Posterior vena cava (tissue), 2 donors: ENCODE measurements at regions of chr12 and their contacts with region 1.

Region 1: DNA sequence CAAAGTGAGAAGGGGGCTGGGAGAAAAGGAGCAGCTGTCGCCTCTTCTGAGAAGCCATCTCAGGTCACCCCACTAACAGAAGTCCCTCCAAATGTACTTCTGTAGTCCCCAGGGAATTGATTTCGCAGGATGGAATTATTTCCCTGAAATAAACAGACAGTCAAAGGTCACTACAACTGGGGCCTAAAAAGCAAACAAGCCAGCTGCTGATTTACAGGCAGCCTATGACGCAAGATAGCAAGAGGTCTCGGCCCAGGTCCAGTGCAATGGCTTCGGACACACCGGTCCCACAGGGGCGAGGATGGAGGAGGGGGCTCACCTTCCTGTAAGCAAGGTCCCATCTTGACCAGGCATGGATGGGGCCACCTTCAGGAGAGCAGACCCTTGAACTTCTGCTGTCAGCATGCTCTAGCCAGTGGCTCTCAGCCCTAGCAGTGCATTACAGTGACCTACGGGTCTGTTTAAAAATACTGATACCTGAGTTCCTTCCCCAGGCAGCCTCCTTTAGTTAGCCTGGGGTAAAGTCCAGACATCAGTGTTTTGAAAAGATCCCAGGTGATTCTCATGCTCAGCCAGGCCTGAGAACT is 18.1 kb downstream of the NUAK1 start:
- DNase-seq: no peak

Region 2: DNA sequence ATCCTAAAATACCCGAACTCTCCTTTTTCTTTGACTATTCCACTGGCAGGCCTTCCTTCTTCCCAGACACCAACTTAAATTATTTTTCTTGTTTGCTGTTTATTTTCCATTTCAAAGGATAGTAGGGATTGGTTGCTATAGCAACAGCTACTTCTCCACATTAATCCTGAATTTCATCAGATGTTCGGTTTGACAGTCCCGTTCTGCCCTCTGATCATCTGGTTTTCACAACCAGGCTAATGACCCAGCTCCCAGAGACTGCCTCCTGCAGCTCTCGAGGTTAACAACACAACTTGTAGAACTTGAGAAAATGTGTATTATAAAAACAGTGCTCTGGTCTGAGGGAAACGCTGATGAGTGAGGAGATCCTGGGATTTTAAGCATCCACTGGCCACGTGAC is 27.4 kb before region 1 on chr12:
- intact Hi-C with region 1: loop called in 1 of 2 experiments (anchors 2 kb)
- DNase-seq: no peak